Gastrocnemius medialis (tissue), 4 donors: ENCODE measurements at regions of chr3 and their contacts with region 1.

Region 1: DNA sequence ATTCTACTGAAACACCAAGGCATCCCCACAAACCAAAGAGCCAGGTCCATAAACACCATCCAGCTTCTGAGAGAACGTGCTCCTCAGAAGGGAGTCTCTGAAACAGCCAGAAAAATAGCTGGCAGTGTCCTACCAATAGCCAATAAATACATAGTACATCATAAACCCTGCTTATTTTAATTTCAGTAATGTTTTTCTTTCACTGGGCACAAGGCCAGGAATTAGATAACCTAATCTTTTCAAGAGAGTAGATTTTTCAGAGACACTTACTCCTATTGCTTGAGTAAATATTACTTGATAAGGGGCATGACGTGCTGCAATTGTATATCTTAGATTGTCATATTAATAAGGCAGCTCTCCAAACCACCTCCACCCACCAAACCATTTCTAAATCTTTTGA is 22.7 kb downstream of the GADL1 start:
- DNase-seq: no peak
- ATAC-seq: no peak
- H3K4me3 ChIP-seq: no peak overlapping the region
- H3K27ac ChIP-seq: peak overlapping the region in 2 of 4 donors; percentile 48 to 81
- H3K4me1 ChIP-seq: peaks cover 30 to 54% of the 10 kb centered on the region in 2 donors
- H3K27me3 ChIP-seq: no peaks in the 10 kb centered on the region
- CTCF ChIP-seq: no peak
- POLR2A ChIP-seq: no peak

Region 2: GRCh38 chr3:30832961-30833575 is 38.7 kb before region 1 on chr3:
- in situ Hi-C with region 1: no loop called
- intact Hi-C with region 1: loop called (anchors 5 kb)
- DNase-seq: no peak
- ATAC-seq: no peak
- H3K4me3 ChIP-seq: no peak overlapping the region
- H3K27ac ChIP-seq: peak overlapping the region in 1 of 4 donors; percentile 5
- H3K4me1 ChIP-seq: peaks cover 6 to 20% of the 10 kb centered on the region in 2 donors
- H3K27me3 ChIP-seq: no peaks in the 10 kb centered on the region
- CTCF ChIP-seq: no peak
- POLR2A ChIP-seq: no peak

Region 3: GRCh38 chr3:31077021-31077601 is 205.4 kb after region 1 on chr3:
- in situ Hi-C with region 1: no loop called
- intact Hi-C with region 1: no loop called
- DNase-seq: no peak
- ATAC-seq: no peak
- H3K4me3 ChIP-seq: no peak overlapping the region
- H3K27ac ChIP-seq: no peak overlapping the region
- H3K4me1 ChIP-seq: no peaks in the 10 kb centered on the region
- H3K27me3 ChIP-seq: no peaks in the 10 kb centered on the region
- CTCF ChIP-seq: no peak
- POLR2A ChIP-seq: no peak